Activated T-helper 1 cell treated with anti-CD3 and anti-CD28 coated beads, Interleukin-12 subunit alpha, Interleukin-12 subunit beta, Interleukin-2, Interleukin-4 antibody, amounts not matched to agents 30 ng/mL and 10 ng/mL and 1 ng/mL, durations not matched to agents 14 hours and 24 hours and 36 hours (primary cell): ENCODE measurements at regions of chr16 and their contacts with region 1.

Region 1: GRCh38 chr16:67561824-67562525 is 351 bp upstream of the CTCF start:
- DNase-seq: peak; percentile 98
- H3K4me3 Mint-ChIP-seq: peak overlapping the region; percentile 88
- H3K27ac Mint-ChIP-seq: peak overlapping the region; percentile 94
- H3K4me1 Mint-ChIP-seq: peaks cover 40% of the 10 kb centered on the region
- H3K27me3 Mint-ChIP-seq: no peaks in the 10 kb centered on the region

Region 2: DNA sequence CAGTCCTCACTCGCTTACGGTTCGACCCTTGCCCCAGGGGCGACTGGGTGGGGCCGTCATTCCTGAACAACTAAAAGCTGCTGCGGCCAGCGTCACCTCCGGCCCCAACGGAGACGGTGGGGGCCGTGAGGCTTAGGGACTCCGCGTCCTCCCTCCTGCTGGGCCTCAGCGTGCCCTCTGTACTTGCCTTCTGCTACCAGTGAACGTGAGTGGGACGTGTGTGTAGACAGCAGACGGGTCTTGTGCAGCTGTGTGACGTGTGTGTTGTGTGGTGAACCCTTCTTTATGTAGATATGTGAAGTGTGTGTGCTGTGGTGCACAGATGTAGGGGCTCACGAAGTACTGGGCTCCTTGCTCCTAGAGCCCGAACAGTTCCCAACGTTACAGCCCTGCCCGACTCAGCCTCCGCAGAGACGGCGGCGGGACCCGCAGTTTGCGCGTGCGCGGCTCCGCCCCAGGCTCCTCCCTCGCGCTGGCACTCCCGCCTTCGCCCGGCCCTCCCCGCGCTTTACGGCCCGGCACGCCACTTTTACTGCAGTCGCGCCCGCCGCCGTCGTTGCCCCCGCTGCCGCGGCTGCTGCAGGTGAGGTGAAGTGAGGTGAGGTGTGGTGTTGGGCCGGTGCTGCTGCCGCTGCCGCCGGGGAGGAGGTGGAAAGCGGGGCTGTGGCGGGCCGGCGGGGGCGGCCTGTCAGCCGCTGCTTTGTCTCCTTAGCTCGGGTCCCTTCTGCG is 452.4 kb before region 1 on chr16 and contains the start of gene PHAF1:
- intact Hi-C with region 1: loop called (anchors 1 kb)
- DNase-seq: peak; percentile 93
- H3K4me3 Mint-ChIP-seq: peak within 1 kb of the TSS; percentile 96
- H3K27ac Mint-ChIP-seq: peak within 1 kb of the TSS; percentile 87
- H3K4me1 Mint-ChIP-seq: peaks cover 45% of the 10 kb centered on the region
- H3K27me3 Mint-ChIP-seq: no peaks in the 10 kb centered on the region
- total RNA-seq, gene PHAF1: 20.5 and 20.6 TPM in 2 replicates

Region 3: GRCh38 chr16:67546761-67547422 is 15.1 kb before region 1 on chr16:
- intact Hi-C with region 1: loop called (anchors 1 kb)
- DNase-seq: peak; percentile 54
- H3K4me3 Mint-ChIP-seq: no peak overlapping the region
- H3K27ac Mint-ChIP-seq: peak overlapping the region; percentile 84
- H3K4me1 Mint-ChIP-seq: peaks cover 37% of the 10 kb centered on the region
- H3K27me3 Mint-ChIP-seq: no peaks in the 10 kb centered on the region

Region 4: DNA sequence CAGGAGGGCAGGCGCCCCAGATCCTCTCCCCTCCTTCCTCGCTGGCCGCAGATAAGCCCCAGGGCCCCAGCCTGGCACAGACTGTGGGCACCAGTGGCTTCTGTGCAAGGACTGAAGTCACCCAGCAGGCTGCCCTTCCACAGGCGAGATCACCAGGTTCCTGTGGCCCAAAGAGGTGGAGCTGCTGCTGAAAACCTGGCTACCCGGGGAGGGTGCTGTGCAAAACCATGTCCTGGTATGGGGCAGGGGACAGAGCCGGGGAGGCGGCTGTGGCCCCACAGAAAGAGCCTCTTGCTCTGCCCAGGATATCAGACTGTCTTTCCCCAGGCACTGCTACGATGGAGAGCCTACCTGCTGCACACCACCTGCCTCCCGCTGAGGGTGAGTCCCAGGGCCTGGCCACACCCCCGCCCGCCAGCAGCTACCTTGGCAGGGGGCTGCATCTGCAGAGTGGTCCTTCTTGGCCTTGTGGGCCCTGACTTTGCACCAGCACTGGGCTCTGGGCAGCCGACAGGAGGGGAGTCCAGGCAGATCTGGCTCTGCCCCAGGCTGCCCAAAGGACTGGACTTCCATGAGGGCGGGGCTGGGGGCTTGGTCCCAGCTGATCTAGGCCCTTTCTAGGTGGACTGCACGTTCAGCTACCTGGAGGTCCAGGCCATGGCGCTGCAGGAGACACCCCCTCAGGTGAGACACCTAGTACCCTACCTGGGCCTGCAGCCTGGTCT is 83.6 kb after region 1 on chr16:
- intact Hi-C with region 1: loop called (anchors 1 kb)
- DNase-seq: no peak
- H3K4me3 Mint-ChIP-seq: peak overlapping the region; percentile 89
- H3K27ac Mint-ChIP-seq: peak overlapping the region; percentile 94
- H3K4me1 Mint-ChIP-seq: no peaks in the 10 kb centered on the region
- H3K27me3 Mint-ChIP-seq: no peaks in the 10 kb centered on the region

Region 5: DNA sequence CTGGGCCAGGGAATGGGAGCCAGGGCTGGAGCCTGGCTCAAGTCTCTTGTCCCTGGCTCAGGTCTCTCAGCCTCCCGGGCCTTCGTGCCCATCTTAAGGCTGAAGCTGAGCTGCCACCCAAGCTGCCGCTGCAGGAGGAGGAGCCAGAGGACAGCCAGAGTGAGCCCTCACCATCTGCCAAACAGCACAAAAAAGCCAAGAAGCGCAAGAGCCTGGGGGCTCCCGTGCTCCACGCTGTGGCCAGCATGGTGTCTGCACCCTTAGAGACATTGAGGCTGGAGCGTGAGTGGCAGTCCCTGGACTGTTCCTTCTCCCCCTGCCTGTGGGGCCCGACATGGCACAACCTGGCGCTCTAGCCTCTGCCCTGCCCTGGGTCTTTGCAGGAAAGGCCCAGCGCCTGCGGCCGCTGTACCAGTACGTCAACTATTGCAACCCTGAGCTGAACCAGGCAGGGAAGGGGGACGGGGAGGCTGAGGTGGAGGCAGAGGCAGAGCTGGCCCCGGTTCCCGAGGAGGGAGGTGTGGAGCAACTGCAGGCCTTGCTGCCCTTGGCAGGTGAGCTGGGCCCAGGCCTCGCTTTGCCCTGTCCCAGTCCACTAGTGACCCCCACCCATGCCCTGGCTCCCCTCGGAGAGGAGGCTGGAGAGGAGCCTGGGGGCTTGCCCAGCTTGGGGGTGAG is 106.0 kb after region 1 on chr16:
- intact Hi-C with region 1: loop called (anchors 1 kb)
- DNase-seq: peak; percentile 76
- H3K4me3 Mint-ChIP-seq: peak overlapping the region; percentile 83
- H3K27ac Mint-ChIP-seq: no peak overlapping the region
- H3K4me1 Mint-ChIP-seq: peaks cover 5% of the 10 kb centered on the region
- H3K27me3 Mint-ChIP-seq: no peaks in the 10 kb centered on the region

Region 6: GRCh38 chr16:67806428-67807147 is 244.6 kb after region 1 on chr16 and contains the starts of genes RANBP10 and TSNAXIP1:
- intact Hi-C with region 1: loop called (anchors 1 kb)
- DNase-seq: peak; percentile 96
- H3K4me3 Mint-ChIP-seq: peak within 1 kb of the TSS; percentile 90
- H3K27ac Mint-ChIP-seq: peak within 1 kb of the TSS; percentile 86
- H3K4me1 Mint-ChIP-seq: peaks cover 35% of the 10 kb centered on the region
- H3K27me3 Mint-ChIP-seq: peaks cover 3% of the 10 kb centered on the region
- total RNA-seq, gene RANBP10: 23.0 and 25.7 TPM in 2 replicates
- total RNA-seq, gene TSNAXIP1: 0.52 and 0.83 TPM in 2 replicates